ENCODE measurements at regions of chr17 and their contacts with region 1.

Region 1: DNA sequence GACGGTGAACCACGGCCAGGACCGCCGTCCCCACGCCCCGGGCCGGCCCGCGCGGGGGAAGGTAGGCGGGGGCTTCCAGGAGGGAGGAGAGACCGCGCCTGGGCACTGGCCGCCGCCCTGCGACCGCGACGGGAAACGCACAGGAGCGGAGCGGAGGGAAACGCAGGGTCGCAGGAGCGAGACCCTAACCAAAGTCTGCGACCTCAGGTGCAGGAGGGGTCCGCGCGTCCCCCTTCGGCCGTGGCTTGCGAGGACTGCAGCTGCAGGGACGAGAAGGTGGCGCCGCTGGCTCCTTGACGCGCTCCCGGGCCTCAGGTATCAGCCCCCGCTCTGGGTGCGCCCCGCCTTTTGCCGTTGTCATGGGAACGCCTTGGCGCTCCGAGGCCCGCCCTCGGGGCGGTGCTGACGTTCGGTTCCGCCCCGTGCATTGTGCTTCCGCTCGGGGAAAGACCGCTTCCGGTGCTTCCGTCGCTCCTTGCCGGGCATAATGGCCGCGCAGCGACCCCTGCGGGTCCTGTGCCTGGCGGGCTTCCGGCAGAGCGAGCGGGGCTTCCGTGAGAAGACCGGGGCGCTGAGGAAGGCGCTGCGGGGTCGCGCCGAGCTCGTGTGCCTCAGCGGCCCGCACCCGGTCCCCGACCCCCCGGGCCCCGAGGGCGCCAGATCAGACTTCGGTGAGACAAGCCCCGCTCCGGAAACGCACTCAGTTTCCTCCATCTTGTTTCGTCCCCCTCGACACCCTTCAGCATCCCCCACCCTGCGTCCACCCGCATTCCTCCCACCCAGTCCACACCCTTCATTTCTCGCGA is at the start of gene OVCA2:
- DNase-seq: peak; percentile 92
- H3K4me3 ChIP-seq: peak within 1 kb of the TSS; percentile 68 to 85 (median 74)
- H3K27ac ChIP-seq: peak within 1 kb of the TSS; percentile 87
- H3K4me1 ChIP-seq: peaks cover 31% of the 10 kb centered on the region
- H3K27me3 ChIP-seq: no peaks in the 10 kb centered on the region
- CTCF ChIP-seq: peak; percentile 12 to 51
- total RNA-seq, gene OVCA2: 44.1 to 65.7 TPM

Region 2: DNA sequence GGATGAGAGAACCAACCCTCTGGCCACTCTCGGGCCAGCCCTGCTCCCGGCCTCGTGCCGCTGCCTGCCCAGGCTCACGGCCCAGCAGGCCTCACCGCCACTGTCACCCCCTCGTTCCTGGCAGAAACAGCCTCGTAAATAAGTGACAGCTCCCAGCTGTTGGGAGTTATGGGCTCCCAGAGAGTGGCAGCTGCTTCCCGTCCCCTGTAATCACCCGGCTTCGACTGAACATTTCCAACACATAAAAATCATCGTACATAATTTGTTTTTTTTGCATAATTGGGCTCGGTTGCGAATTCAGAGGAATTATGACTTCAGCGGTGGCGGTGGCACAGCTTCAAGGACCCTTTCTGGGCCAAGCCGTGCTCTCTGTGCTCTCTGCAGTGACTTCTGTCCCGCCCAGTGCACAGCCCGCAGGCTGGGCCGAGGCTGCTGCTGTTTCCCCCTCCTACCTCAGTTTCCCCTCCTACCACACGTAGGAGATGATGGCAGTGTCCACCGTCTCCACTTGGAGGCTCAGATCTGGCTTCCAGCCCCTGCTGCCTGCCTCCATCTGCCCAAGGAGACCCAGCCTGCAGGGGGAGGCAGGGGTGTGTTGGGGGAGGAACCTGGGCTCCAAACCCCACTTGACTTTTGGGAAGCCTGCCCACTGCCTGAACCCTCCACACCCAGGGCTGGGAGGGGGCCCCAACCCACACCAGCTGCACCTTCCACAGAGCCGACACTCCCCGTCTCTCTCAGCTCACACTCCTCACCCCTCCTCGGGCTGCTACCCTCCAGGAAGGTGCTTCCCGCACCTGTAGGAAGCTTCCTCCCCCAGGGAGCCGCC is 101.6 kb before region 1 on chr17:
- CTCF ChIA-PET with region 1: no interaction called
- dilution Hi-C with region 1: loop called (anchors 5 kb)
- in situ Hi-C with region 1: no loop called
- intact Hi-C with region 1: no loop called
- DNase-seq: no peak
- H3K4me3 ChIP-seq: no peak overlapping the region
- H3K27ac ChIP-seq: no peak overlapping the region
- H3K4me1 ChIP-seq: no peaks in the 10 kb centered on the region
- H3K27me3 ChIP-seq: no peaks in the 10 kb centered on the region
- CTCF ChIP-seq: no peak

Region 3: GRCh38 chr17:1979182-1979989 is 62.4 kb before region 1 on chr17:
- CTCF ChIA-PET with region 1: no interaction called
- dilution Hi-C with region 1: no loop called
- in situ Hi-C with region 1: no loop called
- intact Hi-C with region 1: no loop called
- DNase-seq: no peak
- H3K4me3 ChIP-seq: no peak overlapping the region
- H3K27ac ChIP-seq: no peak overlapping the region
- H3K4me1 ChIP-seq: peaks cover 9% of the 10 kb centered on the region
- H3K27me3 ChIP-seq: peaks cover 6% of the 10 kb centered on the region
- CTCF ChIP-seq: no peak

Region 4: DNA sequence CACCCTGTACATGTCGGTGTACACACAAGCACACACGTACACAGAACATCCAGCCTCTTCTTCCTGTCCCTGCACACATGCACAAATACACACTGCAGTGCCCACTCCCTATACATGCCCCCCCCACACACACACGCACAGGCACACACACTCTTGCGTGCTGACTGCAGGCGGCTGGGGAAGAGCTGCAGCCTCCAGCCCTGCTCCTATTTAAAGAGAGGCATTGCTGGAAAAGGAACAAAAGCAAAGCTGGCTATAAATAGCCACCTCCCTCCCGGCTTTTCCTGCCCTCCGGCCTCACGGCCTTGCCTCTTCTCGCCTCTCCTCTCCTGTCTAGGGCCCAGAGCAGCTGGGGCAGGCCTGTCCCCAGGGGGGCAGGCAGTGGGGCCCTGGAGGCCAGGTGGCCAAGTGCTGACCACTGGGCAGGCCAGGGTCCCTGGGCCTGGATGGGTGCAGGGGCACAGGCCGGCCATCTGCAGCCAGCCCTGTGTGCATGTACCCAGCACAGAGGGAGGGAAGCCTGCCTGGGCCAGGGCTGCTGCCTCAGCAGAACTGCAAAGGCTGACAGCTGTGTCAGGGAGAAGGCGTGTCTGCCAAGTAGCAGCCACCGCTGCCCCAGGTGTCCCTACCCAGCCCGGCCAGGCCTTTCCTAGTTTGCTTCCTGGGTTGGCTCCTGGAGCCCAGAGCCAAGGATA is 42.1 kb before region 1 on chr17:
- CTCF ChIA-PET with region 1: no interaction called
- dilution Hi-C with region 1: loop called (anchors 5 kb)
- in situ Hi-C with region 1: no loop called
- intact Hi-C with region 1: no loop called
- DNase-seq: no peak
- H3K4me3 ChIP-seq: no peak overlapping the region
- H3K27ac ChIP-seq: no peak overlapping the region
- H3K4me1 ChIP-seq: peaks cover 11% of the 10 kb centered on the region
- H3K27me3 ChIP-seq: no peaks in the 10 kb centered on the region
- CTCF ChIP-seq: no peak

Region 5: DNA sequence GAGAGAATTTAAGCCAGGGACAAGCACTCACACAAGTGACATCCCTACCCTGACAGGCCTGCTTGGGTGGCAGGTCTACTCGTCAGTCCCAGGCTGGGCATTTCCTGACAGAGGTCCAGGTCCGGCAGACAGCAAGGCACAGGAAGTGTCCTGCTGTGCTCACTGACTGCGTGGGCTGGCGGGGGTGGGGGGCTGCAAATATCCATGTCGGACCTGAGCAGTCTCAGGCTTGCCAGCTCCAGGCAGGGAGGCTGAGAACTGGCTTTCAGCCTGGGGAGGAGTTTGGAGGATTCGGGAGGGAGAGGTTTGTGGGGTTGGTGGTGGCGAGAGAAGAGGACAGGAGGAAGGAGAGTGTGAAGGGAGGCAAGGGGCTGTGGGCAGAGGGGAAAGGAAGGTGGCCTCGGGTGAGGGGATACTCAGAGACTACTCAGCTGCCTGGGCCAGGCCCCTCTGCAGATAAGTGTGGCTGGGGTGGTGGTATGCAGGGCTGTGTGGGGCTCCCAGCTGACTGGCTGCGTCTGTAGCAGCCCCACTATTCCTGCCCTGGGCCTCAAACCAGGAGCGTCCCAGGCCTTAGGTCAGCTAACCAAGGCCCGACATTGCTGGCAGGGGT is 20.9 kb after region 1 on chr17:
- CTCF ChIA-PET with region 1: no interaction called
- dilution Hi-C with region 1: no loop called
- in situ Hi-C with region 1: no loop called
- intact Hi-C with region 1: no loop called
- DNase-seq: no peak
- H3K4me3 ChIP-seq: no peak overlapping the region
- H3K27ac ChIP-seq: no peak overlapping the region
- H3K4me1 ChIP-seq: no peaks in the 10 kb centered on the region
- H3K27me3 ChIP-seq: no peaks in the 10 kb centered on the region
- CTCF ChIP-seq: no peak

Region 6: GRCh38 chr17:2401426-2402221 is 359.9 kb after region 1 on chr17:
- CTCF ChIA-PET with region 1: no interaction called
- dilution Hi-C with region 1: no loop called
- in situ Hi-C with region 1: no loop called
- intact Hi-C with region 1: loop called (anchors 10 kb)
- DNase-seq: peak; percentile 99
- H3K4me3 ChIP-seq: peak overlapping the region; percentile 51 to 66 (median 66)
- H3K27ac ChIP-seq: peak overlapping the region; percentile 98
- H3K4me1 ChIP-seq: peaks cover 64% of the 10 kb centered on the region
- H3K27me3 ChIP-seq: no peaks in the 10 kb centered on the region
- CTCF ChIP-seq: no peak

Measured in mammary epithelial cell (primary cell).